Caco-2 (cell line): ENCODE measurements at regions of chr9 and their contacts with region 1.

Region 1: GRCh38 chr9:111691672-111692329 is 30.4 kb downstream of the GNG10 start:
- DNase-seq: peak in 1 of 2 experiments; percentile 24
- H3K4me3 ChIP-seq: no peak overlapping the region
- H3K4me3 Mint-ChIP-seq: no peak overlapping the region
- H3K27ac Mint-ChIP-seq: no peak overlapping the region
- H3K4me1 ChIP-seq: no peaks in the 10 kb centered on the region; the same call in 1 of the 2 replicates
- H3K4me1 Mint-ChIP-seq: peaks cover 7% of the 10 kb centered on the region
- H3K27me3 ChIP-seq: no peaks in the 10 kb centered on the region
- H3K27me3 Mint-ChIP-seq: no peaks in the 10 kb centered on the region
- CTCF ChIP-seq: peak; percentile 38 to 52

Region 2: GRCh38 chr9:111483862-111484571 is 207.8 kb before region 1 on chr9 and contains the start of gene ECPAS:
- CTCF ChIA-PET with region 1: no interaction called
- POLR2A ChIA-PET with region 1: no interaction called
- intact Hi-C with region 1: loop called (anchors 10 kb)
- DNase-seq: peak; percentile 87 to 88
- H3K4me3 ChIP-seq: peak within 1 kb of the TSS; percentile 53
- H3K4me3 Mint-ChIP-seq: peak within 1 kb of the TSS; percentile 85
- H3K27ac Mint-ChIP-seq: peak within 1 kb of the TSS; percentile 70
- H3K4me1 ChIP-seq: 0 out of 2 replicates have a peak, but pooled peaks cover 14% of the 10 kb centered on the region
- H3K4me1 Mint-ChIP-seq: peaks cover 11% of the 10 kb centered on the region
- H3K27me3 ChIP-seq: no peaks in the 10 kb centered on the region
- H3K27me3 Mint-ChIP-seq: no peaks in the 10 kb centered on the region
- CTCF ChIP-seq: no peak
- total RNA-seq, gene ECPAS: 66.8 and 77.0 TPM in 2 replicates

Region 3: GRCh38 chr9:111597817-111598729 is 93.7 kb before region 1 on chr9:
- CTCF ChIA-PET with region 1: interaction called, 5 read pairs
- POLR2A ChIA-PET with region 1: interaction called, 14 read pairs
- intact Hi-C with region 1: loop called (anchors 1 kb)
- DNase-seq: peak; percentile 76 to 77
- H3K4me3 ChIP-seq: peak overlapping the region; percentile 61
- H3K4me3 Mint-ChIP-seq: peak overlapping the region; percentile 78
- H3K27ac Mint-ChIP-seq: peak overlapping the region; percentile 80
- H3K4me1 ChIP-seq: peaks cover 17% of the 10 kb centered on the region
- H3K4me1 Mint-ChIP-seq: peaks cover 12% of the 10 kb centered on the region
- H3K27me3 ChIP-seq: no peaks in the 10 kb centered on the region
- H3K27me3 Mint-ChIP-seq: no peaks in the 10 kb centered on the region
- CTCF ChIP-seq: peak; percentile 80 to 84

Region 4: DNA sequence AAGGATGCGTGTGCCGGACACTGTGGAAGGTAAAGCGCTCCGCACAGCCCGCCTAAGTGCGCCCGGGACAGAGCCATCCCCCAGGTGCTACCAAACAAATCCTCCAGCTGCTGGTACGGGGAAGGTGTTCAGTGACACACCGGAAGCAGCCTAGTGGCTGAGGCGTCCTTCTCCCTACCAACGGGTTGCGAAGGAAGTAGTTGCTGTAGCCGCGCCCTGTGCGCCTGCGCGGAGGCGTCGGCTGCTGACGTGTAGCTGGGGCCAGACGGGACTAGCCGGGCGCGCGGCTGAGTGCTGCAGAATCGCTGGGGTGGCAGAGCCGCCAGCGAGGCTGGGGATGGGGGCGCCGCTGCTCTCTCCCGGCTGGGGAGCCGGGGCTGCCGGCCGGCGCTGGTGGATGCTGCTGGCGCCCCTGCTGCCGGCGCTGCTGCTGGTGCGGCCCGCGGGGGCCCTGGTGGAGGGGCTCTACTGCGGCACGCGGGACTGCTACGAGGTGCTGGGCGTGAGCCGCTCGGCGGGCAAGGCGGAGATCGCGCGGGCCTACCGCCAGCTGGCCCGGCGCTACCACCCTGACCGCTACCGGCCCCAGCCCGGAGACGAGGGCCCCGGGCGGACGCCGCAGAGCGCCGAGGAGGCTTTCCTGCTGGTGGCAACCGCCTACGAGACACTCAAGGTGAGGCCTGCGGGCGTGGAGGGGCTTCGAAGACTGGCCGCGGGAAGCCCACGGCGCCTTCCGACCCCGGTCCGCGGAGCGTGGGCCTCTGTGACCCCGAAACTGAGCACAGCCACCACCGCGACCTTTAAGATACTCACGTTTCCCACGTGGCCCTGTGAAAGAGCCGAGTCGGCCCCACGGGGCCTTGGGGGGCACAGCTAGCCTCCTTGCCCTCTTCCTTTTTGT is 60.5 kb before region 1 on chr9 and contains the start of gene DNAJC25:
- CTCF ChIA-PET with region 1: interaction called, 3 read pairs
- POLR2A ChIA-PET with region 1: no interaction called
- intact Hi-C with region 1: loop called (anchors 1 kb)
- DNase-seq: peak; percentile 98 to 99
- H3K4me3 ChIP-seq: peak within 1 kb of the TSS; percentile 88
- H3K4me3 Mint-ChIP-seq: peak within 1 kb of the TSS; percentile 98
- H3K27ac Mint-ChIP-seq: peak within 1 kb of the TSS; percentile 85
- H3K4me1 ChIP-seq: peaks cover 28% of the 10 kb centered on the region
- H3K4me1 Mint-ChIP-seq: peaks cover 37% of the 10 kb centered on the region
- H3K27me3 ChIP-seq: no peaks in the 10 kb centered on the region
- H3K27me3 Mint-ChIP-seq: no peaks in the 10 kb centered on the region
- CTCF ChIP-seq: no peak
- total RNA-seq, gene DNAJC25: 10.2 and 10.4 TPM in 2 replicates

Region 5: DNA sequence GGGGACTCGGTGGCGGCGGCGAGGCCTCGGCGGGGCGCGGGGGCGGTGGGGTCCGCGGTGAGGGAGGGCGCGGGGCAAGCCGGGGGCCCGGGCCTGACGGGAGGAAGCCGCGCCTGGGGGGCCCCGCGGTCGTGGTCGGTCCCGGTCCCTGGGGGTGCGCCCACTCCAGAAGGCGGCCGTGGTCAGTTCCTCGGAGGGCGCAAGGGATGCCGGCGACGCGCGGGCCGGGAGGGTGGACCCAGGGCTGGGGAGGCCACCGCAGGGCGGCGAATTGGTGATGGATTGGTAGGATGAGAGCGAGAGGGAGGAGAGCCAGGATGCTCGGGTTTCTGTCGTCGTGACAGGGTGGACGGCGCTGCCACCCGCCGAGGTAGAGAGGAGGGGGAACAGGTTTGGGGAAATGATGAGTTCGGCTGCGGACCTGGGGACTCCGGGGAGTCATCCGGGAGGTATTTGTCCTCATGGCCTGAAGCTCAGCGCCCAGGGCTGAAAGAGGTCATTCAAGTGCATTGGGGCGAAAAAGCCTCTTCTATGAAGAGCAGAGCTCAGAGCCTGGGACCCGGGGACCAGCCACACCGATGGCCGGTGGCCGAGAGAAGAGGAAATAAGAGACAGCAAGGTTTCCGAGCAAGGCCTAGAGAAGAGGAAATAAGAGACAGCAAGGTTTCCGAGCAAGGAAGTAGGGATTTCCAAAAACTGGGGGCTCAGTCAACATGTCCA is 29.8 kb before region 1 on chr9:
- CTCF ChIA-PET with region 1: interaction called, 4 read pairs
- POLR2A ChIA-PET with region 1: no interaction called
- intact Hi-C with region 1: loop called (anchors 2 kb)
- DNase-seq: peak; percentile 43
- H3K4me3 ChIP-seq: peak overlapping the region; percentile 90
- H3K4me3 Mint-ChIP-seq: peak overlapping the region; percentile 69
- H3K27ac Mint-ChIP-seq: peak overlapping the region; percentile 83
- H3K4me1 ChIP-seq: peaks cover 19% of the 10 kb centered on the region
- H3K4me1 Mint-ChIP-seq: peaks cover 25% of the 10 kb centered on the region
- H3K27me3 ChIP-seq: no peaks in the 10 kb centered on the region
- H3K27me3 Mint-ChIP-seq: no peaks in the 10 kb centered on the region
- CTCF ChIP-seq: no peak

Region 6: GRCh38 chr9:113499153-113499875 is 1807.5 kb after region 1 on chr9:
- CTCF ChIA-PET with region 1: no interaction called
- POLR2A ChIA-PET with region 1: no interaction called
- intact Hi-C with region 1: loop called (anchors 5 kb)
- DNase-seq: no peak
- H3K4me3 ChIP-seq: no peak overlapping the region
- H3K4me3 Mint-ChIP-seq: no peak overlapping the region
- H3K27ac Mint-ChIP-seq: no peak overlapping the region
- H3K4me1 ChIP-seq: no peaks in the 10 kb centered on the region
- H3K4me1 Mint-ChIP-seq: peaks cover 7% of the 10 kb centered on the region
- H3K27me3 ChIP-seq: no peaks in the 10 kb centered on the region
- H3K27me3 Mint-ChIP-seq: no peaks in the 10 kb centered on the region
- CTCF ChIP-seq: no peak